Aorta (tissue), 5 donors: ENCODE measurements at regions of chr1 and their contacts with region 1.

Region 1: DNA sequence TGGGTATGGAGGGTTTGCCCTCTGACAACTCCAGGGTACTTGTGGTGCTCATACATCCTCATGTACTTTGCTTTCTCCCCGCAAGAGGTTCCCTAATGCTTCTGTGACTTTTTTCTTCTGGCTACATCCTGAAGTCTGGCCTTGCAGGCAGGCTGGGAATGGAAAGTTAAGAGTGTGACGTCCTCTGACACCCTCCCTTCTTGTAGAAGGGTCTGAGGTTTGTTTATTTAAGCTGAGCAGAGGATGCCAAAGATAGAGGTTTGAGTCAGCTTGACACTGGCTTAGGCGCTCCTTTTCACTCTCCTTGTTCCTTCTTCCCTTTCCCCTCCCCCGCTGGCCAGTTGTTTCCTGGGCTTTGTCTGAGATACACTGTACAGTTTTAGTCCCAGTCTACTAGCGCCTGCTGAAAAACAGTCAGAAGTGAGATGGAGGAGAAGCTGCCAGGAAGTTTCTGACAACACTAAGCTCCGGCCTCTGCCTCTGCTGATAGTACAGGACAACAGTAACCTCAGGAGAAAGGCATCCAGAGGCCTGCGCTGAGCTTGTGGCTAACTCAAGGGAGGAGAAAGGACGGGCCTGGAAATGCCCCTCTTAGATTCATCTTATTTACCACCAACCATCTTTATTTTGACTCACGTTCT is at the start of gene MACF1:
- DNase-seq: peak; percentile 83 to 85
- ATAC-seq: peak; percentile 94
- H3K4me3 ChIP-seq: peak within 1 kb of the TSS; percentile 62 to 83
- H3K27ac ChIP-seq: peak within 1 kb of the TSS; percentile 77 to 92
- H3K4me1 ChIP-seq: no peaks in the 10 kb centered on the region
- H3K27me3 ChIP-seq: no peaks in the 10 kb centered on the region
- total RNA-seq, gene MACF1: 613 to 785 TPM

Region 2: DNA sequence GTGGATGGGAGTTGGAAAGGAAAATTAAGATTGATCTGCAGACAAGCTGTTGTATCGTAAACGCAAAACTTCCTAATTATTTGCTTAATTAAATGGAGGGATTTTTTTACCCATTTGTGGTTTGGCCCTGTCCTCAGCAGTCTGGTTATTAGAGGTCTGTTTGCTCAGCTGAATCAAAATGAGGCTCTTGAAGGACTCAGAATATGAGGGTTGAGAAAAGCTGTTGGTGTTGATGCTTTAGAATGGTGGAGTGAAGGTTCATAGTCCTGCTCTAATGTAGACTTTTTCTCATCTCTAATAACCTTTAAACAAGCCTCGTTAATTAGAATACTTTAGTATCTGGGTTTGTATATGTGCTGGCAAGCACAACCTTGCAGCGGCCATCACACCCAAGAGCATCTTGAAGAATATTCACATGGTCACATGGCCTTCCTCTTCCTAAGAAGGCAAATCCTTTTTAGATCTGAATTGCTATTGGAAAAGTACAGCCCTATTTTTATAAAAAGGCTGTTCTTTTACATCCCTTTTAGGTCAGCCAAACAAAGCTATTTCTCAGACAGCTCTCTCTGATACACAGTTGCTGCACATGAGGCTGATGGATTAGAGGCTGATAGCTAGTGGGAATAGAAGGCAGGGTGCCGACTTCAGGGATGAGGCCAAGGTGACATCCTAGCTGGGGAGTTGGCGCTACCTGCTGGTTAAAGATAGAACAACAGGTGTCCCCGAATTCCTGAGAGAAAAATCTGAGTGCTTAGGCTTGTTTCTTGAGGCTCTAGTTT is 53.8 kb after region 1 on chr1:
- intact Hi-C with region 1: loop called (anchors 5 kb)
- DNase-seq: peak; percentile 66 to 83
- ATAC-seq: peak; percentile 84
- H3K4me3 ChIP-seq: no peak overlapping the region
- H3K27ac ChIP-seq: peak overlapping the region in 1 of 2 donors; percentile 84
- H3K4me1 ChIP-seq: peaks cover 2 to 3% of the 10 kb centered on the region in 2 donors
- H3K27me3 ChIP-seq: no peaks in the 10 kb centered on the region

Region 3: DNA sequence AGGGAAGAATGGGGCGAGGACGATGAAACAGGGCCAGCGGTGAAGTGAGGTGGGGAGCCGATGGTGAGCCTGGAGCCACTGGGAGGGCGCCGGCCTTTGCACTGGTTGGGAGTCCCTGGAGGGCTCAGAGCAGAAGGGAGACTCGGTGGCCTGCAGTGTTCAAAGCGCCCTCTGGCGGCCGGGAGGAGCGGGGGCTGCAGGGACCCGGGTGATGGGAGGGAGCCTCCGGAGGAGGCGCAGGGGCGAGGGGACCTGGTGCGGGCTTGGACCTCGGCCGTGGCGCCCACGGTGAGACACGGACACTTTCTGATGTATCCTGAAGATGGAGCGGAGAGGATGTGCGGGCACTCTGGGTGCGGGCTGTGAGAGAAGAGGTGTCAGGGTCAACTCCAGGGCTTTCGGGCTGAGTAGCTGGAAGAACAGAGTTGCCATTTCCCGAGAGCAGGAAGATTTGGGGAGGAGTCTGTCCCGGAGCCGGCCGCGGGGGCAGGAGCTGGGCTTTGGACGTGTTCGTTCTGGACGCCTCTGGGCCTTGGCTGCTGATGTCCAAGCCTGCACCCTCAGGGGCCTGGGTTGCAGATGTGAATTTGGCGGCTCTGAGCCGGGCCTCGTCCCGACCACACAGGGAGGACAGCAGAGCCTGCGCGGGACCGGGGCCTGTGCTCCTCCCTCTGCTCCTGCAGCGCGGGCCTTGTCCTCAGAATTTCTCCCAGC is 405.2 kb after region 1 on chr1:
- intact Hi-C with region 1: no loop called
- DNase-seq: peak; percentile 66 to 92
- ATAC-seq: peak; percentile 89
- H3K4me3 ChIP-seq: no peak overlapping the region
- H3K27ac ChIP-seq: no peak overlapping the region
- H3K4me1 ChIP-seq: no peaks in the 10 kb centered on the region
- H3K27me3 ChIP-seq: no peaks in the 10 kb centered on the region